G401 (cell line): ENCODE measurements at regions of chr2 and their contacts with region 1.

Region 1: GRCh38 chr2:153864022-153864421 is 7.7 kb upstream of the GALNT13 start:
- DNase-seq: no peak

Region 2: DNA sequence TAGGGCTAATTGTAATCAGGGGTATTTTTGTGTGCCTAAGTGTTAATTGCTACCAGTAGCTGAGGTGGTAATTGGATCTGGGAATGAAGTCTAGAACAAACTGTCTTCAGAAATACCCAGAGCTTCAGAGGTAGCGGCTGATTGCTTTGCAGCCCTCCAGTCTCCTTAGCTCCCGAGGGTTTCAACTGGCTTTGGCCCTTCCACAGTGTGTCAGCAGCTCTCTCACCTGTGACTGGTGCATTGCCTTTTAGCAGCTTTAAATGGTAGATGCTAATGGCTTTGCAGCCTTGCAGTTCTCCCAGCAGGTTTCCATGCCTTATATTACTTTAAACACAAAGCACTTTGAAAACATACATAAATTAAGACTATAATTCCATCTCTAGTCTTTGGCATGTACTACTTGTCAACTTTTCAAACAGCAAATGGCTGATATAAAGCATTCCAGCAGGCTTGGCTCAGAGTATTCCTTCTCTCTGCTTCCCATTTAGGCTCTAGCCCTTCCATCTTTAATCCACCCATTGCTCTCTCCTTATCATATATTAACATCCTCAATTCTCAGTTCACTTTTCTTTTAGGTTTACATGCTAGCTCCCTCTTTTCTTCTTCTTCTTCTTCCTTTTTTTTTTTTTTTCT is 148.7 kb before region 1 on chr2:
- in situ Hi-C with region 1: no loop called
- DNase-seq: no peak

Region 3: GRCh38 chr2:153802671-153803070 is 61.4 kb before region 1 on chr2:
- in situ Hi-C with region 1: loop called (anchors 5 kb)
- DNase-seq: no peak